HepG2 (cell line): ENCODE measurements at regions of chr12 and their contacts with region 1.

Region 1: DNA sequence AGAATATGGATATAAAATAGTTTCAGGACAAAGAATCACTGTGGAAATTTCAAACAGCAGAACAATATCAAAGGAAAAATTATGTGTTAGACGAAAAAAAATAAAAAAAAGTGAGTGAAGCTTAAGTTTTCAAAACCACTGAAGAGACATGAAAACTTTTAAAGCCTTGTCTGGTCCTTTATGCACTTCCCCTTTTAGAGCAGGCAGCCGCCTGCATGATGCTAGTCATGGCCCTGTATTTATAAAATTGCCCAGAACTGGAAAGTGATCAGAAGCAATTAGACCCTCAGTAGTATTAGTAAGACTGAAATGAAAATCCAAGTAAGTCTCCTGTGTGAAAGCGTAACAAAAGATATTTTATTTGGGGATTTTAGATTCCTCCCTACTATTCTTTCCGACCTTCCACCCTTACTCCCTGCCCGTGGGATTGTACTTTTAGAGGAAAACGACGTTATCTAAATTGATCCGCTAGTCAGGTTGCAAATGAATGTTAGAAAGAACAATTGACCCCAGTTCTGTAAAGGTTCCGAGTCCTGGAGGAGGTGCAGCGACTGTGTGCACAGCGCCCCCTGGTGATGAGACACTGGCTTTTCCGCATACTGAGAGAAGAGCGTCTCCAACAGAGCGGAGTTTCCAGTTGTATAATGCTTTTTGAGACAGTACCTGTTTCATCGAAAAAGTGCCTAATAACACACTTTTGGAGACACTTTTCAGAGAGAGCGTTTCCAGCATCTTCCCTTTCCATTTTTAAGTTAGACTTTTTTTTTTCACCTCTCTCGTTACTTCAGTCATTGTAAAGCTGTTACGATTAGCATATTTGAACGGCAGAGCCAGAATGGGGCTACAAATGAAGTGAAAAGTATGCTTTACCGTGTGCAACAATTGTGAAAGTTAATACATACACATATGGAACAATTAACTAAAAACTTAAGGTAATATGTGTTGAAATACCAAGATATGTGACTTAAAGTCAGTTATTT is 12.4 kb downstream of the MGST1 start:
- DNase-seq: peak; percentile 56
- ATAC-seq: peak; percentile 91
- H3K4me3 ChIP-seq: no peak overlapping the region
- H3K27ac ChIP-seq: no peak overlapping the region
- H3K4me1 ChIP-seq: 0 out of 2 replicates have a peak, but pooled peaks cover 8% of the 10 kb centered on the region
- H3K27me3 ChIP-seq: no peaks in the 10 kb centered on the region
- CTCF ChIP-seq: peak; percentile 82
- EP300 ChIP-seq: no peak
- POLR2A ChIP-seq: peak in 1 of 2 experiments; percentile 36; a peak in 1 of 4 replicates
- RAD21 ChIP-seq: peak; percentile 68; the same call in 1 of the 2 replicates

Region 2: DNA sequence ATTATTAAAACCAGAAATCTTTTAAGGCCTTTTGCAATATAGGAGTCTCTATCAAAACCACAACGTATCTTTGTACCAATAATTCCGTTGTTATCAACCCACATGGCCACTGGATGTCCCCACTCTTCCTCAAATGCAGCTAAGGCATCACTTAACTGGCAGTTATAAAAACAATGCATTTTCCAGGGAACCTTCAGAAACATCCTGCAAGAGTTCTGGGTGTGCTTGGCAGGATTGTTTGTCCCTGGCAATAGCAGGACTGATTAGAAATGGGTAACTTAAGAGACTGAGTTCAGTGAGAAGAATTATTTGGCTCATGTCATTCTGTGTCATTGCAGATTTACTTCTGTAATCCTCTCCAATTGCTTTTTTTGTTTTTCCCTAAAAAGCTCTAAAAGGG is 194.3 kb before region 1 on chr12:
- CTCF ChIA-PET with region 1: interaction called, 14 read pairs
- POLR2A ChIA-PET with region 1: no interaction called
- in situ Hi-C with region 1: loop called (anchors 5 kb)
- intact Hi-C with region 1: loop called (anchors 1 kb)
- DNase-seq: peak; percentile 18
- ATAC-seq: peak; percentile 74
- H3K4me3 ChIP-seq: no peak overlapping the region
- H3K27ac ChIP-seq: no peak overlapping the region
- H3K4me1 ChIP-seq: no peaks in the 10 kb centered on the region
- H3K27me3 ChIP-seq: no peaks in the 10 kb centered on the region
- CTCF ChIP-seq: peak; percentile 68
- EP300 ChIP-seq: no peak
- POLR2A ChIP-seq: no peak
- RAD21 ChIP-seq: peak; percentile 48; the same call in 1 of the 2 replicates

Region 3: GRCh38 chr12:16189849-16190248 is 170.0 kb before region 1 on chr12:
- CTCF ChIA-PET with region 1: no interaction called
- POLR2A ChIA-PET with region 1: no interaction called
- in situ Hi-C with region 1: no loop called
- intact Hi-C with region 1: loop called (anchors 10 kb)
- DNase-seq: peak; percentile 29
- ATAC-seq: peak; percentile 65
- H3K4me3 ChIP-seq: no peak overlapping the region
- H3K27ac ChIP-seq: no peak overlapping the region
- H3K4me1 ChIP-seq: no peaks in the 10 kb centered on the region
- H3K27me3 ChIP-seq: peaks cover 0 to 5% of the 10 kb centered on the region in 2 experiments; a peak in 1 of 5 replicates
- CTCF ChIP-seq: peak; percentile 50
- EP300 ChIP-seq: no peak
- POLR2A ChIP-seq: no peak
- RAD21 ChIP-seq: no peak